Ascending aorta (tissue), 2 donors: ENCODE measurements at regions of chr12 and their contacts with region 1.

Region 1: GRCh38 chr12:13165617-13166041 is 30.9 kb upstream of the EMP1 start:
- DNase-seq: peak; percentile 43 to 88
- H3K4me3 ChIP-seq: no peak overlapping the region
- H3K27ac ChIP-seq: peak overlapping the region; percentile 6 to 29
- H3K4me1 ChIP-seq: peaks cover 0 to 5% of the 10 kb centered on the region in 2 donors
- H3K27me3 ChIP-seq: no peaks in the 10 kb centered on the region
- CTCF ChIP-seq: no peak

Region 2: GRCh38 chr12:13104409-13104808 is 61.2 kb before region 1 on chr12:
- intact Hi-C with region 1: no loop called
- DNase-seq: no peak
- H3K4me3 ChIP-seq: no peak overlapping the region
- H3K27ac ChIP-seq: no peak overlapping the region
- H3K4me1 ChIP-seq: peaks cover 6 to 21% of the 10 kb centered on the region in 2 donors
- H3K27me3 ChIP-seq: no peaks in the 10 kb centered on the region
- CTCF ChIP-seq: no peak

Region 3: DNA sequence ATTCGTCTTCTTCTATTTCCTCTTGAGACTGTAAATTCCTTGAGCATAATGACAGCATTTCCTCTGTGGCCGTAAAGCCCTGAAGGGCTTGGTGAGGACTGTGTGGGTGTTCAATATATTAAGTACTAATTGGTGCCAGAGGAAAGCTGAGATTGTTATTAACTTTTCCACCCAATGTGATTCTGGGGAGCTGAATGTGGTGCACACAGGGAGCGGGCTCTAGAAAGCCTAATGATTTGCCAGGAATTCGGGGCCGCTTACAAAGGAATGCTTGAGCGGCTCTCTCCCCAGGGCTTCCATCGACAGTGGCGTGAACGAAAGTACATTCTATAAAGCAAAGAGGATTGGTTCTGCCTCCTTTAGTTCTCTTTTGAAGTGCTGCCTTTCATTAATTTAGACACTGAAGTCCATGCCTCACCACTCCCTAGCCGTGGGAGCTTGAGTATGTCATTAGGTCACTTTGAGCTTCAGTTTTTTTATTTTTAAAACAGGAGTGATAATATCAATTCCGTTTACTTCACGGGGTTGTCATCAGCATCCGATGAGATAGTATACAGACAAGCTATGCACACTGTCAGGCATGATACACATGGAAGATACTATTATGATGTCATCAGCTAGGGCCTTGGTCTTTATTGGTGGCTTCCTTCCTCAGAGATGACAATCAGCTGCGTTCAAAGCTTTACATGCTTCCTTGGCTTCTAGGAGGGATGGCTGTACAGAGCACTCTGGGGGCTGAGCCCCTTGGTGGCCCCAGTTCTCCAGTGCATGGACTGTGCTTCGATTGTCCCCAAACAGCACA is 51.2 kb before region 1 on chr12:
- intact Hi-C with region 1: loop called (anchors 5 kb)
- DNase-seq: no peak
- H3K4me3 ChIP-seq: no peak overlapping the region
- H3K27ac ChIP-seq: no peak overlapping the region
- H3K4me1 ChIP-seq: peaks cover 0 to 9% of the 10 kb centered on the region in 2 donors
- H3K27me3 ChIP-seq: no peaks in the 10 kb centered on the region
- CTCF ChIP-seq: no peak

Region 4: DNA sequence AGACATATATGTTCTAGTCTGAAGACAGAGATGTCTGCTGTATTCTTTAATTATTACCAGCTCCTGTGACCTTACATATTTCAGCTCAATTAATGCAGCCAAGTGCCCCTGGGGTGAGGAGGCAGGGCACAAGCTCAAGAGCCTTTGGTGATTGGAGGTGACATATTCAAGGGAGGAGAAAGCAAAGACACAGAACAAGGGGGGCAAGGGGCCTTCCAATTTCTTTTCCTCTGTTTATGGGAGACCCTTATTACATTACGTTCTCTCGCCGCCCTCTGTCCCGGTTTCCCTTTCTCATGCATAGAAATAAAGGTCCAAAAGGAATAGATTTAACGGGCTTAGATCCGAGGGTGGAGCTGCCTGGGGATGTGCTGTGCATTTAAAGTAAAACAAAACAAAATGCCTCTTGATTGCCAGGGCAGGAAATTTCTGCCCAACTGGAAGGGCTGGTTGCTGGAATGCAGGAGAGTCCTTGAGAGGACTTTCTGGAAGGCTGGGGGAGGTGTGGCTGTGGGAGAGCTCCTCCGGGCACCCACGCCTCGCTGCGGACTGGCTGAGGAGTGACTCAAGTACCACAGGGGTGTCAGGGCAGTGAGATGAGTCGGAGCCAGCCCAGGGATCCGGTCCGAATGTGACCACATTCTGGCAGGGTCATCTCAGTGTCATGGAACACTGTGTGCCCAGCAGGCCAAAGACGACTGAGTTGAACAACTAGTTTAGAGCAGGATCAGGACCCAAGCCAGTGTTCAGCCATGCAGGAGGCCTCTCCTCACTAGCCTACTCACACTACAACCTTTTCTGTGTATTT is 30.1 kb before region 1 on chr12:
- intact Hi-C with region 1: no loop called
- DNase-seq: peak in 1 of 2 donors; percentile 85
- H3K4me3 ChIP-seq: no peak overlapping the region
- H3K27ac ChIP-seq: no peak overlapping the region
- H3K4me1 ChIP-seq: no peaks in the 10 kb centered on the region
- H3K27me3 ChIP-seq: no peaks in the 10 kb centered on the region
- CTCF ChIP-seq: no peak

Region 5: GRCh38 chr12:13362260-13362841 is 196.7 kb after region 1 on chr12:
- intact Hi-C with region 1: no loop called
- DNase-seq: peak in 1 of 2 donors; percentile 67
- H3K4me3 ChIP-seq: no peak overlapping the region
- H3K27ac ChIP-seq: no peak overlapping the region
- H3K4me1 ChIP-seq: no peaks in the 10 kb centered on the region
- H3K27me3 ChIP-seq: no peaks in the 10 kb centered on the region
- CTCF ChIP-seq: peak in 2 of 3 experiments; percentile 59 to 71